ENCODE measurements at regions of chr11 and their contacts with region 1.

Region 1: GRCh38 chr11:47387911-47388678 is 9.7 kb upstream of the SPI1 start:
- DNase-seq: no peak
- H3K4me3 ChIP-seq: no peak overlapping the region
- H3K27ac ChIP-seq: no peak overlapping the region
- H3K4me1 ChIP-seq: peaks cover under 1% of the 10 kb centered on the region
- H3K27me3 ChIP-seq: no peaks in the 10 kb centered on the region
- CTCF ChIP-seq: no peak

Region 2: DNA sequence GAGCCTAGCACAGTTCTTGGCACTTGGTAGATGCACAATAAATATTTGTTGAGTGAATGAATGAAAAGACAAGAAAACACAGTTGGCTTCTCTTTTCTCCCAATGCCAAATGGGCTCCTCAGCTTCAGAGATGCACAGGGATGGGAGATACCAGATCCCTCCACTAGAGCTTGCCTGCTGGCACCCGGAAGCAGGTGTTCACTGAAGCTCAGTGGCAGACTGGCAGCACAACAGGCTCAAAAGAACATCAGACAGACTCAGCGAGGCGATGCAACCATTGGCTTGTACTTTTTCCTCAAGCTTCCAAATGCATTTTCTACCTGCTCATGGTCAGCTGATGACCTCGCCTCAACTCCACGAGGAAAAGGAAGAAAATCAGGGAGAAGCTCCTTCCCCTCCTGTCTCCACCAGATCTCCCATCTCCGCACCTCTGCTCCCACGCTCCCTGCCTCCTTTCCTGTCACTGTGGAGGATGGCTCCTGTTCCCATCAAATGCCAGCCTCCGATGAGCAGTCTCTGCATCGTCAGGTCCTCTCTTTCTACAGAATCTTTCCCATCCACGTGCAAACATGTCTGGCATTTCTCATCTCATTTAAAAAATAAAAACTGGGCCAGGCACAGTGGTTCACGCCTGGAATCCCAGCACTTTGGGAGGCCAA is 55.1 kb after region 1 on chr11:
- intact Hi-C with region 1: loop called (anchors 10 kb)
- DNase-seq: no peak
- H3K4me3 ChIP-seq: no peak overlapping the region
- H3K27ac ChIP-seq: peak overlapping the region; percentile 74
- H3K4me1 ChIP-seq: peaks cover 12% of the 10 kb centered on the region
- H3K27me3 ChIP-seq: no peaks in the 10 kb centered on the region
- CTCF ChIP-seq: no peak

Region 3: DNA sequence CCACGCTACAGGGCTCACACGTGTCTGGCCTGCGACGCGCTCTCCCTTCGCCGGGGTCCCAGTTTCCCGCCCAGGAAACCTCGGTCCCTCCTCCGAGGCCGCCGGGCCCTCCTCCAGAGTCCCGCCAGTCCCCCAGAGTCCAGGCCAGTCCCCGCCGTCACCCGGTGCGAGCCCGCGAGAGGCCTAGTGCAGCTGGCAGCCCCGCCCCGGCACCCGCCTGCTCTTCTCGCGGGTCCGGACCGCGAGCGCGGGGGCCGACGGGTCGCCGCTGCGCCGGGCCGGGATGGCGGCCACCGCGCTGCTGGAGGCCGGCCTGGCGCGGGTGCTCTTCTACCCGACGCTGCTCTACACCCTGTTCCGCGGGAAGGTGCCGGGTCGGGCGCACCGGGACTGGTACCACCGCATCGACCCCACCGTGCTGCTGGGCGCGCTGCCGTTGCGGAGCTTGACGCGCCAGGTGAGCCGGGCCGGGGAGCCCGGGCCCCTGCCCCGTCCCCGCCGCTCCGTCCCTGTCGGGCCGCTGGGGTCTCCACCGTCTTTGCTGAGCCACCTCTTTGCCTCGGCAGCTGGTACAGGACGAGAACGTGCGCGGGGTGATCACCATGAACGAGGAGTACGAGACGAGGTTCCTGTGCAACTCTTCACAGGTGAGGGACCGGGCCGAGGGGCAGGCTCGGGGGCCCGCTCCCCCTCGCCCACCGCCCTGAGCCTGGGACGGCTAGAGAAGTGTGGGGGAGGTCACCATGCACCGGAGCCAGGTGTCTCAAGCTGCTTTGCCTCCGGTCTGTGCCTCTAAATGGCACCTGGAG is 177.4 kb after region 1 on chr11 and contains the start of gene PTPMT1:
- intact Hi-C with region 1: no loop called
- DNase-seq: peak; percentile 82
- H3K4me3 ChIP-seq: peak within 1 kb of the TSS; percentile 98
- H3K27ac ChIP-seq: peak within 1 kb of the TSS; percentile 82
- H3K4me1 ChIP-seq: peaks cover 24% of the 10 kb centered on the region
- H3K27me3 ChIP-seq: no peaks in the 10 kb centered on the region
- CTCF ChIP-seq: no peak
- total RNA-seq, gene PTPMT1: 23.6 TPM

Measured in left ventricle myocardium inferior (tissue), 1 donor.